ENCODE measurements at regions of chr7 and their contacts with region 1.

Region 1: DNA sequence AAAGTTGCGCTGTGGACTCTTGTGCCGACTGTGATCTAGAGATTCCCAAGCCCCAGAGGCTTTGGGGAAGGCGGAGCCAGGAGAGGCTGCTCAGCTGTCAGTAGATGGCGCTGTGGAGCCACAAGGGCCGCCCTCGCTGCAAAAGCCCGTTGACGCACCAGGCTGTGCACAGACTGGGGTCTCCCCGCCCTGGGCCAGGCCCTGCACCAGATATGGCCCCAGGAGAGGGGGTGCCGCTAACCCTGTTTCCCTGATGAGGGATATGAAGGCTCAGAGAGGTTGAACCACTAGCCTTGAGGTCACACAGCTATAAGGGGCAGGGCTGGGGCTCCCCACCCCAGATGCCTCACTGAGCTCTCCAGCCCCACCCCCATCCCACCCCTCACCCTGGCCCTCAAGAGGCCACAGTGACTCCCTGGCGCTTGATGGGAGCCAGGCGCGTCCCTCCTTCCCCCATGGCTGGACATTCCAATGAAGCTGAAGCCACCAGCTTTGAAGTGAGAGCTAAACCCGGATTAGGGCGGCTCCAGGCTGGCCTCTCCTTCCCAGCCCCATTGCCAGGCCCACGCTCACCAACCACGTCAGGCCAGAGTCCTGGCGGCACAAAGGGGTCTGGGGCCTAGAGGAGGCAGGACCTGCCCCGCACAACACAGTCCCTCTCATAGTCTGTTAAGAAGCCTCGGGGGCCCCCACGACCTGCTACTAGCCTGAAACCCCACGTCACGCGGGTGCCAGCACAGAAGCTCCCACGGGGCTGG is 26.4 kb downstream of the MYL10 start:
- DNase-seq: peak; percentile 81 to 88
- ATAC-seq: peak; percentile 94 to 98 (median 94)
- H3K4me3 ChIP-seq: no peak overlapping the region
- H3K27ac ChIP-seq: no peak overlapping the region
- H3K4me1 ChIP-seq: peaks cover 4% of the 10 kb centered on the region
- H3K27me3 ChIP-seq: no peaks in the 10 kb centered on the region
- CTCF ChIP-seq: peak; percentile 95

Region 2: GRCh38 chr7:101669307-101669706 is 66.6 kb after region 1 on chr7:
- intact Hi-C with region 1: no loop called
- DNase-seq: no peak
- ATAC-seq: no peak
- H3K4me3 ChIP-seq: no peak overlapping the region
- H3K27ac ChIP-seq: no peak overlapping the region
- H3K4me1 ChIP-seq: peaks cover 15% of the 10 kb centered on the region
- H3K27me3 ChIP-seq: no peaks in the 10 kb centered on the region
- CTCF ChIP-seq: peak; percentile 7

Region 3: DNA sequence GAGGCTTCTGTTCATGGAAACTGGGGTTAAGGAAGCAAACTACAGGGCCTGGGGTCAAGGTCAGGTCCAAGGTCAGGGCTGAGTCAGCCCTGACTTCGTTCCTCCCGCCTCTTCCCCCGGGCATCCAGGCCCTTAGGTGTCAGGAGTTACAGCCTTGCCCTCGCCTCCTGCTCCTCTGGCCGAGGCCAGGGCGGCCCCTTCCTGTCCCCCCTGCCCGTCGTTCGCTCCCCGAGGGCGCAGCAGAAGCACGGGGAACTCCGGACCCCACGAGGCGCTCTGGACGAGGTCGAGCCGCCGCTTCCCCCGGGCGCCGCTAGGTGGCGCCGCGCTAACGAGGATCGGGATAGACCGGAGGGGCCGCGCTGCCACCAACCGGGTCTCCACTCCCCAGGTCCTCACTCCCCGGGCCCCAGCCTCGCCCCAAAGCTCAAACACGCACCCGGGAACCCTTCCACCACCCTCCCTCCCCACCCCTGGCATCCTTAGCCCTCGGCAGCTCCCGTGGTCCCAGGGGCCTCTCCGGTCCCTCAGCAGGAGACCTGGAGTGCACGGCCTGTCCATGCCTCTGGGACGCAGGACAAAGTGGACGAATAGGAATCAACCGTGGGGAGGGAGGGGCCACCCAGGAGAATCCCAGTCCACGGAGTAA is 85.6 kb after region 1 on chr7:
- intact Hi-C with region 1: loop called (anchors 5 kb)
- DNase-seq: peak; percentile 82 to 89
- ATAC-seq: peak; percentile 87 to 98 (median 92)
- H3K4me3 ChIP-seq: peak overlapping the region; percentile 49
- H3K27ac ChIP-seq: no peak overlapping the region
- H3K4me1 ChIP-seq: no peaks in the 10 kb centered on the region
- H3K27me3 ChIP-seq: no peaks in the 10 kb centered on the region
- CTCF ChIP-seq: peak; percentile 95

Region 4: DNA sequence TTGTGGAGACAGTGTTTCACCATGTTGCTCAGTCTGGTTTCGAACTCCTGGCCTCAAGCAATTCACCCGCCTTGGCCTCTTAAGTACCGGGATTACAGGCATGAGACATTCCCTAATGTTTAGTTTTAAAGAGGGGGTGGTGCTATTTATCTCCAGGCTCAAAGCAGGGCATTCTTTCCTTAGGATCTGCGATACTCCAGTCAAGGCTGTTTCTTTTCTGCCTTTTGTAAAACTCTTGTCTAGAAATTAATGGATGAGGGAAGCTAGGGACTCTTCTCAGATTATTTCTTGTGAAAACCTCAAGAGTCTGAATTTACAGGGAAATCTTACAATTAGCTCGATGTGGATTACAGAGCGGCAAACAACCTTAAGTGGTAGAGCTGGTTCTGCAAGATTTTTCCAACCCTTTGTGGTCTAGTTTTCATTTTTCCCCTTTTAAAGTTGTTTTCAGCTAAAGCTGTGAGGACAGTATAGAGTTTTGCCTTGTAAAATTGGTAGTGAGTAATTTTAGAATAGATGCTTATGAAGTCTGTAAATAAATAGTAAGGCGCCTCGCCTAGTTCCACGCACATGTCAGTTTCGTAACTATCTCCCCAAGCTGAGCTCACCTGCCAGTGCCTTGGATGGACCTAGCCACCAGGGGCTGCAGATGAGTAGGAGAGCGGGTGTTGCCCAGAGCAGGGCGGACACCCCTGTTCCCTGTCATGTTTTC is 267.8 kb after region 1 on chr7:
- intact Hi-C with region 1: no loop called
- DNase-seq: no peak
- ATAC-seq: peak in 2 of 4 donors; percentile 42 to 62
- H3K4me3 ChIP-seq: no peak overlapping the region
- H3K27ac ChIP-seq: peak overlapping the region; percentile 56
- H3K4me1 ChIP-seq: peaks cover 56% of the 10 kb centered on the region
- H3K27me3 ChIP-seq: no peaks in the 10 kb centered on the region
- CTCF ChIP-seq: peak; percentile 16

Region 5: DNA sequence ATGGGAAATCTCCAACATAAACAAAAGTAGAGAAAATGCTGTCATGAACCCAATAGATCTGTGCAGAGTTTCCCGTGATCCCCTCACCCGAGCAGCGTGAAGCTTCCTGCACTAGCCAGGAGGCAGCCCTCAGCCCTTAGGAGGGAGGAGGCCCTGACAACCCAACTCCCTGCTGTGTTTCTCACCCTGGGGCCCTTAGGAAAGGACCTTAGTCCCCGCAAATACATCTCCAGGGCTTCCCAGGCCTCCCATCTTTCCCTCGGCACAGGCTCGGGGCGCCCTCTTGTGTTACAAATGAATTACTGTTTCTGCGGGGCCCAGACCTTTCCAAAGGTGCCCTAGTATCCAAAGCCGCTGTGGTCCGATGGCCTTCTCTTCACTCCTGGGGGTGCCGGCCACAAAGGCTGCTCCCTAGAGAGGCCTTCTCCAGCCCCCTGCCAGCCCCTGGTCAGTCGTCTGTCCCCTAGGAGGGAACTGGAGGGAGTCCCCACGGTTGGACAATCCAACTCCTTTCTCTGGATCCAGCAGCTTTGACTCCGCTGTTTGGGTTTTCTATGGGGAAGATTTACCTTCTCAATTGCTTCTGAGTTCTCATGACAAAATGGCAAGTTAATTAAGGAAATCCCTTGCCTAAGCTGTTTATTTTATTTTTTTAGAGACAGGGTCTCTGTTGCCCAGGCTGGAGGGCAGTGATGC is 634.1 kb after region 1 on chr7:
- intact Hi-C with region 1: loop called in 1 of 2 experiments (anchors 10 kb)
- DNase-seq: peak; percentile 47 to 72
- ATAC-seq: peak; percentile 71 to 94 (median 84)
- H3K4me3 ChIP-seq: no peak overlapping the region
- H3K27ac ChIP-seq: no peak overlapping the region
- H3K4me1 ChIP-seq: no peaks in the 10 kb centered on the region
- H3K27me3 ChIP-seq: no peaks in the 10 kb centered on the region
- CTCF ChIP-seq: peak; percentile 78

Region 6: DNA sequence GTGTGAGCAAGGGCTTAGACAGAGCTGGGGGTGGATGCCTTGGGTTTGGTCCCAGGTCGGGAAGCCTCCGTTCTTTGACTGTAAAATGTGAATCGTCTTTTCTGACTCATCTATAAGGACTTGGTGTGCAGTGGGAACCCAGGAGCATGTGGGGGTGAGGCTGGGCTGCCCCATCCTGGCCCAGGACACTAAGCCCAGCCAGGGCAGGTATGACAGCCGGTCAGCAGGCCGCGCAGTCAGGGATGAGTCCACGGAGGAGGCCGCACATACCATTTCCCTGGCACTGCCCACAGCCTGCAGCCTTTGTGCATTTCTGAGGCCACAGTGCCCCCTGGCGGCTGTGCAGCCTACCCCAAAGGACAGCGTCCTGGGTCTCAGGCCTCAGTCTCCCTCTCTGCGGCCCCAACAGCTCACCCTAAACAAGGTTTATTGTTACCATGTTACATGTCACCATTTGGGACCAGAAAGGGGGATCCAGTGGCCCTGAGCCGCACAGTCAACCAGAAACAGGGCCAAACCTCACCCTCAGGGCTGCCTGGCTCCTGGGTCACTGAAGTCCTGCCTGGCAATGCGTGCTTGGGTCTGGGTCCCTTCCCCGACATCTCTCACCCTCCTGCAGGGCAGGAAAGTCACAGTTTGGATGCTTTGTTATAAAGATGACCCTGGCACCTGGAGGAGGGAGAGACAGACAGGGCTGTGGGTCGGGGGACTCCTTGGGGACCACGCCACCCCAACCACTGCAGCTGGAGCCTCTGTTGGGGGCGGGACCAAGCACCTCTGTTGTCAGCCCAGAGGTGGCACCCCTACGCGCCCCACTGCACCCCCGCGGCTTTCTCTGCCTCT is 669.6 kb after region 1 on chr7:
- intact Hi-C with region 1: loop called (anchors 2 to 10 kb)
- DNase-seq: peak; percentile 83 to 91
- ATAC-seq: peak; percentile 93 to 97 (median 96)
- H3K4me3 ChIP-seq: no peak overlapping the region
- H3K27ac ChIP-seq: no peak overlapping the region
- H3K4me1 ChIP-seq: no peaks in the 10 kb centered on the region
- H3K27me3 ChIP-seq: no peaks in the 10 kb centered on the region
- CTCF ChIP-seq: peak; percentile 95

Region 7: DNA sequence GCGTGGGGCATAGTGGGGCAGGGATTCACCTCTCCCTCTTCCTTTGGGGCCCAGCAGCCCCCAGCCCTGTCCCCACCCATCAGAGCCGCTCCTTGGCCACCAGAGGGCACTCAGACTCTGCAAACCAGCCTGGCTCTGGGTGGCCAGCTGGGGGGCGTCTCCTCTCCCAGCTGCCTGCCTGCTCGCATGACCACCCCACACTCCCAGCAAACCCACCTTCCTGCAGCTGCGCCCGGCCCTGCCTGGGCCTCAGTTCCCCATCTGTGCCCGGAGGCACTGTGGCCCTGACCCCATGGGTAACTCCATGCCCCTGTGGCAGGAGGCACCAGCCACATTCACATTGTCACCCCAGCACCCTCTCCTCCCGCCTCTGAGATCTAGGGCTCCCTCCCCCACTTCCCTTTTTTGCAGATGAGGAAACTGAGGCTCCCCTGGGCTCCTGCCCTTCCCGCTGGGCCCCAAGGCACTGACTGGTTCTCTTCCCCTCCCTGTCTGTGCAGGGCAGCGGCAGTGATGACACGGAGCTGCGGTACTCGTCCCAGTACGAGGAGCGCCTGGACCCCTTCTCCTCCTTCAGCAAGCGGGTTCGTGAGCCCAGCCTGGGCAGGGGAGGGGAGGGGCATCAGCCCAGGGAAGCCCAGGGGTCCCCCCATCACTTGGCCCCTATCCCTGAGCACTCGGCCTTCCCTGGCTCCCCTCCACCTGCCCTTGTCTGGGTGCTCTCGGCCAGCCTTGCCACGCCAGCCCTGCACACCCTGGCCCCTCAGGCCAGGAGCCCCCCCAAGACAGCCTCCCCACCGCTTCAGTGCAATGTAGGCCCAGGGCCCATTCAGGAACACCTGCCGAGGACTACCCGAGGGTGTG is 677.1 kb after region 1 on chr7:
- intact Hi-C with region 1: loop called in 1 of 2 experiments (anchors 10 kb)
- DNase-seq: peak in 1 of 2 donors; percentile 80
- ATAC-seq: peak; percentile 78 to 94 (median 84)
- H3K4me3 ChIP-seq: no peak overlapping the region
- H3K27ac ChIP-seq: no peak overlapping the region
- H3K4me1 ChIP-seq: no peaks in the 10 kb centered on the region
- H3K27me3 ChIP-seq: no peaks in the 10 kb centered on the region
- CTCF ChIP-seq: peak; percentile 86

Measured in psoas muscle (tissue), 8 donors.